ENCODE measurements at regions of chr1 and their contacts with region 1.

Region 1: DNA sequence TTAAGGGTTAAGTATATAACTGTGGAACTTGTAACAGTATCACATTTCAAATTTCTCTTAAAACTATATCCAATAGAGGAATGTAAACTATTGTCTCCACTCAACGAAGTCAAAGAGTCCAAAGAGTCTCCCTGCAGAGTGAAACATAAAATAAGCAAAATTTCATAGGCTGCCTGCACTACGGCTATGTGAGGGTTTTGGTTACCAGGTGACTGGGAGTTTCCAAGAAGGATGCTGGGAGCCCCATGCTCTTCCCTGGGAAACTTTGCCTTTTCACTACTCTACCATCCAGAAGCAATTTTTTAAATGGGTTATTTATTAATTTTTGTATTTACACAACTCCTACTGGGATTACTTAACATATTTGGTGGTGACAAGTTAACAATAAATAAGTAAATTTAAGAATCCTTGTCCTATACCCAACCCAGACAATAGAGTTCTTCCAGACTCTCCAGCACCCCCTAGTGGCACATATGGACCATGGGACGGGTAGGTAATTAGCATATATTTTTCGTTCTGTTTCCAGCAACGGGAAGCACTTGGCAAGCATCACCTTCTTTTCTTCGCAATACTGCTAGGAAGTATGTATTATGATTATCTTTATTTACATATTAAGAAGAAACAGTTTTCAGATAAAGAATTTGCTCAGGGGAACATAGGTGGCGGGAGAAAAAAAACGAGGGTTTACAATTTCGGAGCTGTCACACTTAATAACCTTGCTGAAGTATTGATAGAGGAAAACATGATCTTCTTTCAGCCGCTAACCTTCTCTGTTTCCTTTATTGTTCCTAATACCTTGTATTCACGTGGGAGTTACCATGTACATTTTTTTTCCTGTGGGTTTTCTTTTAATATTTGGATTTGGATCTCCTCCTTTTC is 3.5 kb downstream of the FMO2 start:
- DNase-seq: no peak
- ATAC-seq: peak; percentile 64

Region 2: GRCh38 chr1:171081314-171081753 is 107.3 kb before region 1 on chr1:
- intact Hi-C with region 1: loop called (anchors 2 kb)
- DNase-seq: no peak
- ATAC-seq: peak; percentile 55

Region 3: GRCh38 chr1:171107262-171107940 is 81.2 kb before region 1 on chr1:
- intact Hi-C with region 1: loop called (anchors 5 kb)
- DNase-seq: no peak
- ATAC-seq: peak; percentile 49

Region 4: GRCh38 chr1:171141688-171142415 is 46.8 kb before region 1 on chr1:
- intact Hi-C with region 1: loop called (anchors 1 kb)
- DNase-seq: peak; percentile 64
- ATAC-seq: peak; percentile 78

Region 5: GRCh38 chr1:171381866-171382210 is 193.2 kb after region 1 on chr1:
- intact Hi-C with region 1: no loop called
- DNase-seq: no peak
- ATAC-seq: no peak

Measured in Right ventricle myocardium inferior (tissue), 1 donor.